PC-9 (cell line): ENCODE measurements at regions of chr18 and their contacts with region 1.

Region 1: DNA sequence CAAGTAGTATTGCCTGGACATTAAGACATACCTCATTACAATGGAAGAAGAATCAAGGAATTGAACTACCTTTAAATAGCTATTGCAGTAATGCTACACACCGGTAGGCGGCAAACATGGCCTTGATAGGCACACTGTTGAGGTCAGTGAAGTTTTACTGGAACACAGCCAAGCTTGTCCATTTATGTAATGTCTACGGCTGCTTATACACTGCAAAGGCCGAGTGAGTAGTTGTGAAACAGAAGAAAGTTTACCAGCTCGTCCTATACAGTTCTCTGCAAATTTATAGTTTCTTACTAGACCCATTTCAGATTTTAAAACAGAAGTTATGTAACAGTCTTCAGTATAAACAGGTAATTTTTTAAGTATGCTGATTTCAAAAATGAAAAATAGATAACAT is 38.8 kb downstream of the PPP4R1 start:
- DNase-seq: peak; percentile 75 to 85
- H3K4me3 ChIP-seq: no peak overlapping the region
- H3K27ac ChIP-seq: peak overlapping the region; percentile 53
- H3K4me1 ChIP-seq: peaks cover 6% of the 10 kb centered on the region
- H3K27me3 ChIP-seq: no peaks in the 10 kb centered on the region
- CTCF ChIP-seq: peak; percentile 90

Region 2: GRCh38 chr18:8895987-8896619 is 679.5 kb before region 1 on chr18:
- CTCF ChIA-PET with region 1: no interaction called
- POLR2A ChIA-PET with region 1: no interaction called
- intact Hi-C with region 1: no loop called
- DNase-seq: no peak
- H3K4me3 ChIP-seq: no peak overlapping the region
- H3K27ac ChIP-seq: no peak overlapping the region
- H3K4me1 ChIP-seq: peaks cover 7% of the 10 kb centered on the region
- H3K27me3 ChIP-seq: no peaks in the 10 kb centered on the region
- CTCF ChIP-seq: no peak

Region 3: GRCh38 chr18:9482790-9483189 is 92.8 kb before region 1 on chr18:
- CTCF ChIA-PET with region 1: no interaction called
- POLR2A ChIA-PET with region 1: no interaction called
- intact Hi-C with region 1: no loop called
- DNase-seq: no peak
- H3K4me3 ChIP-seq: no peak overlapping the region
- H3K27ac ChIP-seq: no peak overlapping the region
- H3K4me1 ChIP-seq: no peaks in the 10 kb centered on the region
- H3K27me3 ChIP-seq: no peaks in the 10 kb centered on the region
- CTCF ChIP-seq: no peak

Region 4: GRCh38 chr18:9614401-9615279 is 39.1 kb after region 1 on chr18 and contains the start of gene PPP4R1:
- CTCF ChIA-PET with region 1: interaction called, 7 read pairs
- POLR2A ChIA-PET with region 1: interaction called, 3 read pairs
- intact Hi-C with region 1: loop called (anchors 5 kb)
- DNase-seq: peak; percentile 56 to 80
- H3K4me3 ChIP-seq: peak within 1 kb of the TSS; percentile 94
- H3K27ac ChIP-seq: peak within 1 kb of the TSS; percentile 97
- H3K4me1 ChIP-seq: peaks cover 71% of the 10 kb centered on the region
- H3K27me3 ChIP-seq: no peaks in the 10 kb centered on the region
- CTCF ChIP-seq: no peak
- total RNA-seq, gene PPP4R1: 157 and 167 TPM in 2 replicates

Region 5: DNA sequence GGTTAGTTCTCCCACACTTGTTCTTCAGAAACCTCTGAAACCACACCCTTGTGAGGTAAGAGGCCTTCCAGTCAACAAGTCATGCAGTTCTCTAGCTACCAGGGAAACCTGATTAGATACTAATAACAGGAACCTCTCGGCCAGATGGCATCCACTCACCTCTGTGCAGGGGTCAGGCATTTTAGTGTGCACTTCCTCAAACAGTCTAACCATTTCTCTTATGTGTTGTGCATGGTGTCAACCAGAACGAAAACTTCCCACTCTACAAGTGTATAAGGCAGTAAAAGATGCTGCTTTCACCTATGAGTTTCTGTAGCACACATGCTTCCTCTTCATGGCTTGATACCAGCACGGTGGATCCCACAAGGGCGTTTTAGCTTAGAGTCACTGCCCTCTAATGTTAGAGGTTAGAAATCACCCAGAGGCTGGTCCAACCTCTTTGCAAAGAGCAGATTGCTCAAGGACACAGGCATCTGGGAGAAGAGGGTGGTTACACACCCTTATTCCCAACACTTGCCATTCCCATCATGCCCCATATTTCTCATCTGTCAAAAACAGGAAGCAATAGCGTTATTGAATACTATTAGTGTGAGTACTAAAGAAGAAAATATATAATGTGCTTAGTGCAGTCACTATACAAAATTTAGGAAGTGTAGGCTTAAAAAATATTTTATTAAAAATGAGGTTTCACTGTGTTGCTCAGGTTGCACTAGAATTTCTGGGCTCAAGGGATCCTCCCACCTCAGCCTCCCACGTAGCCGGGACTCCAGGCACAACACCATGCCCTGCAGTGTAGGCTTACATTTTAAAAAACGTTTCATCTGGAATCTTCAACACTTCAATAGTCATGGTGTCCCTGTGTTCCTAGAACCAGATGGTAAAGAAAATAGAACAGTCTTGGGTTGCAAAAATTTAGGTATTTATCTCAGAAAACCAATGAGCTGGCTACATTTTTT is 98.0 kb after region 1 on chr18:
- CTCF ChIA-PET with region 1: interaction called, 8 read pairs
- POLR2A ChIA-PET with region 1: interaction called, 3 read pairs
- intact Hi-C with region 1: loop called (anchors 1 kb)
- DNase-seq: peak; percentile 84 to 100
- H3K4me3 ChIP-seq: peak overlapping the region; percentile 36; the same call in 1 of the 2 replicates
- H3K27ac ChIP-seq: peak overlapping the region; percentile 92
- H3K4me1 ChIP-seq: peaks cover 34% of the 10 kb centered on the region
- H3K27me3 ChIP-seq: no peaks in the 10 kb centered on the region
- CTCF ChIP-seq: peak; percentile 61

Region 6: GRCh38 chr18:9719421-9719981 is 143.9 kb after region 1 on chr18:
- CTCF ChIA-PET with region 1: interaction called, 8 read pairs
- POLR2A ChIA-PET with region 1: no interaction called
- intact Hi-C with region 1: loop called (anchors 2 kb)
- DNase-seq: peak; percentile 78 to 82
- H3K4me3 ChIP-seq: peak overlapping the region; percentile 24; the same call in 1 of the 2 replicates
- H3K27ac ChIP-seq: peak overlapping the region; percentile 76
- H3K4me1 ChIP-seq: peaks cover 39% of the 10 kb centered on the region
- H3K27me3 ChIP-seq: no peaks in the 10 kb centered on the region
- CTCF ChIP-seq: no peak

Region 7: GRCh38 chr18:9951022-9951859 is 375.7 kb after region 1 on chr18:
- CTCF ChIA-PET with region 1: no interaction called
- POLR2A ChIA-PET with region 1: no interaction called
- intact Hi-C with region 1: loop called (anchors 5 kb)
- DNase-seq: peak; percentile 22 to 46
- H3K4me3 ChIP-seq: no peak overlapping the region
- H3K27ac ChIP-seq: 0 out of 2 replicates have a peak overlapping the region, but pooled peaks have one; percentile 20
- H3K4me1 ChIP-seq: no peaks in the 10 kb centered on the region; the same call in 1 of the 2 replicates
- H3K27me3 ChIP-seq: no peaks in the 10 kb centered on the region
- CTCF ChIP-seq: peak; percentile 73